Prostate gland (tissue), 2 donors: ENCODE measurements at regions of chr18 and their contacts with region 1.

Region 1: GRCh38 chr18:44679056-44679905 is 1.4 kb upstream of the SETBP1 start:
- DNase-seq: peak; percentile 86
- H3K4me3 ChIP-seq: peak overlapping the region; percentile 78
- H3K27ac ChIP-seq: peak overlapping the region; percentile 98
- H3K4me1 ChIP-seq: no peaks in the 10 kb centered on the region
- H3K27me3 ChIP-seq: no peaks in the 10 kb centered on the region
- CTCF ChIP-seq: peak; percentile 65 to 88 (median 72)
- POLR2A ChIP-seq: peak; percentile 66

Region 2: GRCh38 chr18:44392933-44393332 is 286.3 kb before region 1 on chr18:
- intact Hi-C with region 1: loop called (anchors 10 kb)
- DNase-seq: no peak
- H3K4me3 ChIP-seq: no peak overlapping the region
- H3K27ac ChIP-seq: no peak overlapping the region
- H3K4me1 ChIP-seq: no peaks in the 10 kb centered on the region
- H3K27me3 ChIP-seq: no peaks in the 10 kb centered on the region
- CTCF ChIP-seq: no peak
- POLR2A ChIP-seq: no peak

Region 3: GRCh38 chr18:44870631-44871502 is 191.6 kb after region 1 on chr18:
- intact Hi-C with region 1: no loop called
- DNase-seq: peak; percentile 54
- H3K4me3 ChIP-seq: no peak overlapping the region
- H3K27ac ChIP-seq: peak overlapping the region in 1 of 2 donors; percentile 42
- H3K4me1 ChIP-seq: no peaks in the 10 kb centered on the region
- H3K27me3 ChIP-seq: no peaks in the 10 kb centered on the region
- CTCF ChIP-seq: no peak
- POLR2A ChIP-seq: no peak

Region 4: DNA sequence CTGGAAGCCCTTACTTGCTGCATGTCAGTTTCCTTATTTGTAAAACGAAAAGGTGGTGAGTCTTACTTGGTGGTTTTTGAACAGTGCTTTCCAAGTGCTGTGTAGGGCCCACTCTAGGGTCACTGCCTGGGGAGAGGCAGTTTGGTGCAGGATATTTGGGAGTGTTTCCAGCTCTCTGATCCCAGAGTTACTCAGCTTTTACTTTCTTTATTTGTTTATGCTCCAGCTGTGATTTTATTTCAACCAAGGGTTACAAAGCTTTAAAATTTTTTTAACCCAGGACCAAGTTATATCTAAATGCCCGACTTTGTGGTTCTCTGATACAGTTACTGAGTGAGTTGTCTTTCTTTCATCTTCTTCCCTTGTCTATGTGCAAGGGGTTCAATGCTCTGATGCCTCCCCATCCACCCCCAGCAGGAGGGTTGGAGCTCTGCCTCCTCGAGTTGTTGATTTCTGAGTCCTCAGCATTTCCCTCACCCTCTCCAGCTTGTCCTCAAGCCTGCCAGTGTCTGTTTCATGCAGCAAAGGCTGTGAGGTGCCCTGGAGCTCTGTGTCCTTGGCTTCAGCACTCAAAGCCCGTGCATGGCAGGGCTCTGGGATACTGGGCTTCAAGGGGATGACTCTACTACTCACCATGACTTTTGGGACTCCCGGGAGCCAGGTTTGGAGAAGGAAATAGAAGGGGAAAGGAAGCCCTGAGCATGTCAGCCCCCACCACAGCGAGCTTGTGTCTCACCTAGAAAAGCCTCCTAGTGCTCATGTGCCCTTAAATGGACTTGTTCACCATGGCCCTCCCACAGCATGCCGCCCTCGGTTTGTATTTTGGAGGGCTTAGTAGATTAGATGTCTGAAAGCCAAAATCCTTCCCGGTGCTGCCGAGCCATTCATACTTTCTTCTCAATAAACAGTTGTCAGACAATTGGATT is 238.2 kb after region 1 on chr18:
- intact Hi-C with region 1: loop called (anchors 5 kb)
- DNase-seq: no peak
- H3K4me3 ChIP-seq: no peak overlapping the region
- H3K27ac ChIP-seq: peak overlapping the region; percentile 47 to 51
- H3K4me1 ChIP-seq: no peaks in the 10 kb centered on the region
- H3K27me3 ChIP-seq: no peaks in the 10 kb centered on the region
- CTCF ChIP-seq: no peak
- POLR2A ChIP-seq: no peak

Region 5: GRCh38 chr18:45212181-45213039 is 533.1 kb after region 1 on chr18:
- intact Hi-C with region 1: loop called (anchors 2 kb)
- DNase-seq: peak; percentile 79
- H3K4me3 ChIP-seq: no peak overlapping the region
- H3K27ac ChIP-seq: no peak overlapping the region
- H3K4me1 ChIP-seq: no peaks in the 10 kb centered on the region
- H3K27me3 ChIP-seq: no peaks in the 10 kb centered on the region
- CTCF ChIP-seq: peak; percentile 43 to 84 (median 82)
- POLR2A ChIP-seq: no peak

Region 6: DNA sequence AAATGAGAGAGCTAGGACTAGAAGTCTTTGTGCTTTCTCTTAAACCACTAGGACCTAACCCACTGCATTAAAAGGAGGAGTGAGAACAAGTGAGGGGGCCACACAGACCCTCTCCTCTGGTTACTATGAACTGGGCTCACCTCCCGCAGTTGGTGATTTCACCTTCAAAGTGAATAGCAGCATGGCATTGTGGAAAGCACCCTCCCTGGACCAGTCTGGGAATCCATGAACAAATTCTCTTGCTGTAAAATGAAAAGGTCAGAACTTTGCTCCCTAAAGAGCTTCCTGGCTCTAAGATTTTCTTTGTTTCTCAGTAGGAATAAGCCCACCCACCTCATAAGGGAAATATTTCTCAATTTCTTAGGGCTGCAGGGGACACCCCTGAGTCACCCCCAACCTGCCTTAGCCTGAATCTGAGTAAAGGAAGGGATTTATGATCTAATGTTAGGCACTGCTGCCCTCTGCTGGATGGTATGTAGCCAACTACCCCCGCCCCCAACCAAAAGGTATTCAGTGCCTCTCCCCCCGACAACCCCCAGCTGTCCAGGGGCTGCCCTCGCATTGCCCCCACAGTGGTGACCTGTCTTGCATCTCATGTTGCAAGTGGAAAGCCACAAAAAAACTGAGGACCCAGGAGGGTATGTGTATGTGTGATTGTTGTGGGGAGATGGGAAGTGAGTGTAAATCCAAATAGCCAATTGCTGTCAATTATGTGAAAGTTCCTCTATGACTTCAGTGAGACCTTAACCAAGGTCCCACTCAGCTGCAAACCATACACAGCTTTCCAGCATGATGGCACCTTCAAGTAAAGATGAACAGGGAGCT is 705.1 kb after region 1 on chr18:
- intact Hi-C with region 1: loop called (anchors 10 kb)
- DNase-seq: peak; percentile 38
- H3K4me3 ChIP-seq: no peak overlapping the region
- H3K27ac ChIP-seq: no peak overlapping the region
- H3K4me1 ChIP-seq: no peaks in the 10 kb centered on the region
- H3K27me3 ChIP-seq: no peaks in the 10 kb centered on the region
- CTCF ChIP-seq: peak; percentile 48 to 69 (median 60)
- POLR2A ChIP-seq: no peak

Region 7: GRCh38 chr18:45621061-45621511 is 941.8 kb after region 1 on chr18:
- intact Hi-C with region 1: loop called (anchors 10 kb)
- DNase-seq: no peak
- H3K4me3 ChIP-seq: no peak overlapping the region
- H3K27ac ChIP-seq: no peak overlapping the region
- H3K4me1 ChIP-seq: peaks cover 3% of the 10 kb centered on the region
- H3K27me3 ChIP-seq: no peaks in the 10 kb centered on the region
- CTCF ChIP-seq: peak; percentile 76 to 84 (median 80)
- POLR2A ChIP-seq: no peak